Left lung (tissue), 14 donors: ENCODE measurements at regions of chr19 and their contacts with region 1.

Region 1: DNA sequence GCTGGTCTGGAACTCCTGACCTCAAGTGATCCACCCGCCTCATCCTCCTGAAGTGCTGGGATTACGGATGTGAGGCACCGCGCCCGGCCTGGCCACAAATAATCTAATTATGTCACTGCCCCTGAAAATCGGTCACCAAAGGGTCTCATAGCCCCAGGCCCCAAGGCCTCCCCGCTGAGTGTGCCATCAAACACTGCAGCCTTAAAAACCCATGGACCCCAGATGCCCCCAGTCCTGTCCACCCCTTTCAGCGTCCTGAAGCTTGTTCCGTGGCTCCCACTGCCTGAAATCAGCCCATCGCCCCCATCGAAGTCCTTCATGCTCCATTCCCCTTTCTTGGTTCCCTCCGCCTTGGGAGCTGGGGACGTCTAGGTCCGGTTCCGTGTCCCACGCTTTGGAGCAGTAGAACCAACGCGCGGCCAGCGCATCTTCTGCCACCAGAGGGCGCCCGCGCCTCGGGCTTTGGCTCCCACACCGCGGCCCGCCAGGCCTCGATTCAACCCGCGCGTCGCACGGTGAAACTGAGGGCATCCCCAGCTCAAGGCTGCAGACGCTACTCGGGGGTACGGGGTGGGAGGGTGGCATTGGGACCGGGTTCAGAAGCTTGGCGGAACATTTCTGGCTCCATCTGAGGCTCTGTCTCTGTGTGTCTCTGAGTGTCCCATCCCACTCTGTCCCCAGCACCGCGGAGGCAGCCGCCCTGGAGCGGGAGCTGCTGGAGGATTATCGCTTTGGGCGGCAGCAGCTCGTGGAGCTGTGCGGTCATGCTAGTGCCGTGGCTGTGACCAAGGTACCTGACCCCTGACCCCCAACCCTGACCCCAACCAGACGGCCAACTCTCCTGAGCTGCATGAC is 3.5 kb downstream of the YJEFN3 start:
- DNase-seq: peak; percentile 74 to 99 (median 80)
- ATAC-seq: peak; percentile 87
- H3K4me3 ChIP-seq: no peak overlapping the region
- H3K27ac ChIP-seq: no peak overlapping the region
- H3K4me1 ChIP-seq: peaks cover 0 to 9% of the 10 kb centered on the region in 2 donors
- H3K27me3 ChIP-seq: peaks cover 0 to 8% of the 10 kb centered on the region in 2 donors
- CTCF ChIP-seq: peak; percentile 95 to 96

Region 2: GRCh38 chr19:19649580-19650242 is 117.5 kb after region 1 on chr19:
- intact Hi-C with region 1: loop called in 1 of 2 experiments (anchors 5 kb)
- DNase-seq: peak in 1 of 4 donors; percentile 77
- ATAC-seq: no peak
- H3K4me3 ChIP-seq: no peak overlapping the region
- H3K27ac ChIP-seq: no peak overlapping the region
- H3K4me1 ChIP-seq: no peaks in the 10 kb centered on the region
- H3K27me3 ChIP-seq: no peaks in the 10 kb centered on the region
- CTCF ChIP-seq: no peak

Region 3: DNA sequence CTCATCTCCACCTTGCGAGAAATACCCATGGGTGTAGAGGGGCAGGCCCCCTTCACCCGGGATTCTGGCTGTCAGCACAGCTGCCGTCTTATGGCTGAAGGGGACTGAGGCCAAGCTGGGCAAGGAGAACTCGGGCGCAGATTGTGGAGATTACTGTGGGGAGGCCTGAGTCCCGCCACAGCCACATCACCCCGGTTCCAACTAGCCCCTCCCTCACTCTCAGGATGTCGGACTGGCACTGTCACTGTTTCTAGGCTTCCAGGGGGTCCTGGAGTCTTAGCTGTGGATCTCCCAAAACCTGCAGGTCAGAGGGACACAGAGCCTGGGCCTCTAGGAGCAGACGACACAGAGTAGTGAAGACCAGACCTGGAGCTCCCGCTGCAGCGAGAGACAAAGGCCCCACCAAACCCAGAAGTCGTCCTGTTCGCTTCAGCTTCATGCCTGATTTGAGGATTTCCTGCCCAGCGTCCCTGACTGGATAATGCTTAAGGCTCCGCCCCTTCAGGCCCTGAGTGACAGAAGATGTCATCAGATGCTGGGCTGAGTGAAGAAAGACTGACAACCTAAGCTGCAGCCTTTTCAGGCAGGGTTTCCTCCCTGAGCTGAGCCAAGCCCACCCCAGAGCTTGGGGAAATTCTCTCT is 424.4 kb after region 1 on chr19:
- intact Hi-C with region 1: loop called in 1 of 2 experiments (anchors 10 kb)
- DNase-seq: peak in 1 of 4 donors; percentile 20
- ATAC-seq: no peak
- H3K4me3 ChIP-seq: no peak overlapping the region
- H3K27ac ChIP-seq: no peak overlapping the region
- H3K4me1 ChIP-seq: peaks cover 0 to 4% of the 10 kb centered on the region in 2 donors
- H3K27me3 ChIP-seq: no peaks in the 10 kb centered on the region
- CTCF ChIP-seq: no peak